GM12878 (cell line): ENCODE measurements at regions of chr5 and their contacts with region 1.

Region 1: GRCh38 chr5:55691265-55692105 is 20.6 kb downstream of the SLC38A9 start:
- DNase-seq: no peak
- ATAC-seq: peak; percentile 67
- H3K4me3 ChIP-seq: no peak overlapping the region
- H3K27ac ChIP-seq: no peak overlapping the region
- H3K4me1 ChIP-seq: no peaks in the 10 kb centered on the region
- H3K27me3 ChIP-seq: no peaks in the 10 kb centered on the region
- CTCF ChIP-seq: peak; percentile 26 to 50 (median 40); a peak in 4 of 6 replicates
- EP300 ChIP-seq: no peak
- POLR2A ChIP-seq: no peak
- RAD21 ChIP-seq: peak; percentile 58

Region 2: DNA sequence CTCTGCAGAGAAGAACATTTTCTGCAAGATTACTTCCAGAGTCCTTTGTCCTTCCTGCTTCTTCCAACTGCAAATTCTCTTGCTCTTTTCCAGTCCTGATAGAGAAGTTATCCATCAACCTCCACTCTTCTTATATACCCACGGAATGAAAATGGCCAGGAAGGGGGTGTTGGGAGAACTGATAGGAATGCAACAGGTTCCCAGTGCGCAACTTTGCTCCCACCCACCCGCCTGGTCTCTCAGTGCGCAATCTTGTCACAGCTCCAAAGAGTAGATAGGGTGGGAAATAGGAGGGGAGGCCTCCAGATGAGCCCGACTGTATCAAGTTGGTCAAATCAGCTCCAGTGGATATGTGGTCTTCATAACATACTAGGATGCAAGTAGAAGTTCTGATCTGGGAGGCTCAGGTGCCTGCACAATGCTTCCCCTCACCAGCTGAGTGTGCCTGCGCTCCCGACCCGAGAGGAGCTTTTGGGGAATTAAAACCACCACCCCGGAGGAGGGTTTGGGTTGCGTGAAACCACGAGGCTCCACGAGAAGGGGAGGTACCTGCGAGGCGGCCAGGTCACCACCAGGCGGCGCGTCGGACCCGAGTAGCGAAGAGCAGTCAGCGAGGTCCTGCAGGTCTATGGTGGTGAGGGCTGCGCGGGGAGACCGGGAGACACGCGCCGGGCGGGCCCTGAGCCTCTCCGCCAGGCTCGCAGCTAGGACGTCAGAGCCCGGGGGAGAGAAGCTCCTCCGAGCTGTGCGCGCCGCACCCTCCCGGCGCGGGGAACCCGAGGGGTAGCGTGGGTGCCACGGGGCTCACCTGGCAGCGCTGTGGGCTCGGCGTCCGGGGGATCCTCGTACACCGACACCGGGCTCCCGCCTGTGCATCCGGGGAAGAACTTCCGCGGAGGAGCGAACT is 465.2 kb before region 1 on chr5:
- CTCF ChIA-PET with region 1: interaction called, 3 read pairs
- POLR2A ChIA-PET with region 1: no interaction called
- RAD21 ChIA-PET with region 1: no interaction called
- SMC1A ChIA-PET with region 1: no interaction called
- in situ Hi-C with region 1: no loop called
- intact Hi-C with region 1: loop called (anchors 5 kb)
- DNase-seq: no peak
- ATAC-seq: peak; percentile 79
- H3K4me3 ChIP-seq: peak overlapping the region; percentile 26; the same call in 1 of the 2 replicates
- H3K27ac ChIP-seq: no peak overlapping the region
- H3K4me1 ChIP-seq: peaks cover 13% of the 10 kb centered on the region
- H3K27me3 ChIP-seq: peaks cover 33 to 43% of the 10 kb centered on the region in 2 experiments
- CTCF ChIP-seq: peak; percentile 43 to 68 (median 60)
- EP300 ChIP-seq: no peak
- POLR2A ChIP-seq: no peak; the same call in 1 of the 2 replicates
- RAD21 ChIP-seq: peak; percentile 47; the same call in 1 of the 2 replicates

Region 3: GRCh38 chr5:55344392-55344992 is 347.0 kb before region 1 on chr5:
- CTCF ChIA-PET with region 1: interaction called, 31 read pairs
- POLR2A ChIA-PET with region 1: no interaction called
- RAD21 ChIA-PET with region 1: interaction called, 16 read pairs
- SMC1A ChIA-PET with region 1: interaction called, 7 read pairs
- in situ Hi-C with region 1: loop called (anchors 10 kb)
- intact Hi-C with region 1: loop called (anchors 1 kb)
- DNase-seq: no peak
- ATAC-seq: peak; percentile 68; the same call in 2 of the 3 replicates
- H3K4me3 ChIP-seq: no peak overlapping the region
- H3K27ac ChIP-seq: no peak overlapping the region
- H3K4me1 ChIP-seq: no peaks in the 10 kb centered on the region
- H3K27me3 ChIP-seq: no peaks in the 10 kb centered on the region
- CTCF ChIP-seq: peak; percentile 67 to 75 (median 74)
- EP300 ChIP-seq: no peak
- POLR2A ChIP-seq: no peak
- RAD21 ChIP-seq: peak; percentile 72

Region 4: GRCh38 chr5:55497712-55498111 is 193.8 kb before region 1 on chr5:
- CTCF ChIA-PET with region 1: interaction called, 6 read pairs
- POLR2A ChIA-PET with region 1: no interaction called
- RAD21 ChIA-PET with region 1: interaction called, 8 read pairs
- SMC1A ChIA-PET with region 1: interaction called, 11 read pairs
- in situ Hi-C with region 1: no loop called
- intact Hi-C with region 1: loop called (anchors 5 kb)
- DNase-seq: no peak
- ATAC-seq: no peak
- H3K4me3 ChIP-seq: no peak overlapping the region
- H3K27ac ChIP-seq: no peak overlapping the region
- H3K4me1 ChIP-seq: no peaks in the 10 kb centered on the region
- H3K27me3 ChIP-seq: no peaks in the 10 kb centered on the region
- CTCF ChIP-seq: no peak
- EP300 ChIP-seq: no peak
- POLR2A ChIP-seq: no peak
- RAD21 ChIP-seq: no peak

Region 5: DNA sequence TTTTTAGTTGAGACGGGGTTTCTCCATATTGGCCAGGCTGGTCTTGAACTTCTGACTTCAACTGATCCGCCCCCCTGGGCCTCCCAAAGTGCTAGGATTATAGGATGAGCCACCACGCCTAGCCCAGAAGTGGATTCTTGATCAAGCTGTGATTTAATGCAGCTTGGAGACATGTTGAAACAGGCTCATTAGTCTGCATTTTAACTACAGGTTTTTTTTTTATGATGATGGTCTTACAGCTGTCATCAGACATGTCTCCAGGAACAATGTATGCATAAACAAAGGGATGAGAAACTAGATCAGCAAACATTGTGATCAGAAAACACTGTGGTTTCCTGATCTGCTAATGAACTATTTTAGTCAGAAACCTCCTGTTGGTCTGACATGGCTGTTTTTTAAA is 126.8 kb before region 1 on chr5:
- CTCF ChIA-PET with region 1: no interaction called
- POLR2A ChIA-PET with region 1: no interaction called
- RAD21 ChIA-PET with region 1: no interaction called
- SMC1A ChIA-PET with region 1: no interaction called
- in situ Hi-C with region 1: no loop called
- intact Hi-C with region 1: no loop called
- DNase-seq: peak; percentile 52
- ATAC-seq: peak; percentile 75
- H3K4me3 ChIP-seq: no peak overlapping the region
- H3K27ac ChIP-seq: no peak overlapping the region
- H3K4me1 ChIP-seq: peaks cover 10% of the 10 kb centered on the region
- H3K27me3 ChIP-seq: no peaks in the 10 kb centered on the region
- CTCF ChIP-seq: no peak
- EP300 ChIP-seq: no peak; a peak in 1 of 4 replicates
- POLR2A ChIP-seq: no peak
- RAD21 ChIP-seq: no peak

Region 6: GRCh38 chr5:55702598-55703345 is 11.3 kb after region 1 on chr5:
- CTCF ChIA-PET with region 1: interaction called, 21 read pairs
- POLR2A ChIA-PET with region 1: no interaction called
- RAD21 ChIA-PET with region 1: interaction called, 5 read pairs
- SMC1A ChIA-PET with region 1: interaction called, 7 read pairs
- in situ Hi-C with region 1: no loop called
- intact Hi-C with region 1: no loop called
- DNase-seq: no peak
- ATAC-seq: peak; percentile 55
- H3K4me3 ChIP-seq: no peak overlapping the region
- H3K27ac ChIP-seq: peak overlapping the region; percentile 27; the same call in 1 of the 2 replicates
- H3K4me1 ChIP-seq: peaks cover 20% of the 10 kb centered on the region
- H3K27me3 ChIP-seq: no peaks in the 10 kb centered on the region
- CTCF ChIP-seq: no peak
- EP300 ChIP-seq: no peak
- POLR2A ChIP-seq: no peak
- RAD21 ChIP-seq: no peak